GM12878 (cell line): ENCODE measurements at regions of chr2 and their contacts with region 1.

Region 1: DNA sequence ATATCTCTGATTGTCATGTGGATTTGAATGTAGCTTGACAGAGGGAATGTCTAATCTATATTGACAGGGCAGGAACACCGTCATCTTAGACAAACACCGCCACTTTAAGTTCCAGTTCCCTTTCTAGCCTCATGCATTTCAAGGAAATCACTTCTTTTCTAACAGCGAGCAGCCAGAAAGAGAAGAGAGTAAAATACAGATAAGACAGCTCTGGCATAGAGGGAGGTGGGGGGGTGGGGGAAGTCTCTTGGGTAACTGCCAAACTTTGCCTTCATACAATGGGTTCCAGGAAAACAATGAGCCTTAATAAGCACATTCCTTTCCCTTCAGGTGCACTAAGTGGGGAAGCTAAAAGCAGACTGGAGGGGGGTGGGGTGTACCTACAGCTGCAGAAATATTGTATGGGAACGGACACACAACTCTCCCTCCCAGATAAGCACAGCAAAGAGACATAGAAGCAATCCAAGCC is 37.2 kb downstream of the CASP10 start:
- DNase-seq: no peak
- ATAC-seq: no peak
- H3K4me3 ChIP-seq: no peak overlapping the region
- H3K27ac ChIP-seq: no peak overlapping the region
- H3K4me1 ChIP-seq: peaks cover 6% of the 10 kb centered on the region
- H3K27me3 ChIP-seq: no peaks in the 10 kb centered on the region; a peak in 1 of 4 replicates
- CTCF ChIP-seq: no peak
- EP300 ChIP-seq: no peak
- POLR2A ChIP-seq: no peak
- RAD21 ChIP-seq: no peak

Region 2: GRCh38 chr2:201049455-201049854 is 170.7 kb before region 1 on chr2:
- CTCF ChIA-PET with region 1: no interaction called
- POLR2A ChIA-PET with region 1: no interaction called
- RAD21 ChIA-PET with region 1: no interaction called
- SMC1A ChIA-PET with region 1: no interaction called
- in situ Hi-C with region 1: no loop called
- intact Hi-C with region 1: no loop called
- DNase-seq: no peak
- ATAC-seq: no peak
- H3K4me3 ChIP-seq: no peak overlapping the region
- H3K27ac ChIP-seq: no peak overlapping the region
- H3K4me1 ChIP-seq: no peaks in the 10 kb centered on the region
- H3K27me3 ChIP-seq: no peaks in the 10 kb centered on the region
- CTCF ChIP-seq: no peak
- EP300 ChIP-seq: no peak
- POLR2A ChIP-seq: no peak
- RAD21 ChIP-seq: no peak

Region 3: DNA sequence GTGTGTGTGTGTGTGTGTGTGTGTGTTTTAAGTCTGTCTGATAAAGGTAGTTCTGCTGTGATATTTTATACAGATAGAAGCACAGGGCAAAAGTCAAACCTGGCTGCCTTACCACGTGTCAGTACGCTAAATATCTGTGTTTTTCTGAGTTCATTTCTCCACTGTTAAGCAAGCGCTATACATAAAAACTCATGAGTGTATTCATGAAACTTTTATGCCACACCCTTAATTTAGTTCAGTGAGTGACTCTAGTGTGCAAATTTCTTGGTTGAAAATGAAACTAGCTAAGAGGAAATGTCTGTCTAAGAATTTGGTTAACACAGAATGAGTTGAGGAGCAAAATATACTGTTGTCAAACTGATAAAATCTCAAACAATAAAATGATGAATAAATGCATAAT is 26.0 kb before region 1 on chr2:
- CTCF ChIA-PET with region 1: interaction called, 13 read pairs
- POLR2A ChIA-PET with region 1: interaction called, 3 read pairs
- RAD21 ChIA-PET with region 1: interaction called, 3 read pairs
- SMC1A ChIA-PET with region 1: interaction called, 7 read pairs
- in situ Hi-C with region 1: loop called (anchors 5 kb)
- intact Hi-C with region 1: no loop called
- DNase-seq: peak; percentile 55
- ATAC-seq: peak; percentile 98
- H3K4me3 ChIP-seq: no peak overlapping the region
- H3K27ac ChIP-seq: no peak overlapping the region
- H3K4me1 ChIP-seq: peaks cover 12% of the 10 kb centered on the region; the same call in 1 of the 2 replicates
- H3K27me3 ChIP-seq: no peaks in the 10 kb centered on the region
- CTCF ChIP-seq: no peak
- EP300 ChIP-seq: peak; percentile 29 to 57; a peak in 2 of 4 replicates
- POLR2A ChIP-seq: no peak
- RAD21 ChIP-seq: no peak

Region 4: DNA sequence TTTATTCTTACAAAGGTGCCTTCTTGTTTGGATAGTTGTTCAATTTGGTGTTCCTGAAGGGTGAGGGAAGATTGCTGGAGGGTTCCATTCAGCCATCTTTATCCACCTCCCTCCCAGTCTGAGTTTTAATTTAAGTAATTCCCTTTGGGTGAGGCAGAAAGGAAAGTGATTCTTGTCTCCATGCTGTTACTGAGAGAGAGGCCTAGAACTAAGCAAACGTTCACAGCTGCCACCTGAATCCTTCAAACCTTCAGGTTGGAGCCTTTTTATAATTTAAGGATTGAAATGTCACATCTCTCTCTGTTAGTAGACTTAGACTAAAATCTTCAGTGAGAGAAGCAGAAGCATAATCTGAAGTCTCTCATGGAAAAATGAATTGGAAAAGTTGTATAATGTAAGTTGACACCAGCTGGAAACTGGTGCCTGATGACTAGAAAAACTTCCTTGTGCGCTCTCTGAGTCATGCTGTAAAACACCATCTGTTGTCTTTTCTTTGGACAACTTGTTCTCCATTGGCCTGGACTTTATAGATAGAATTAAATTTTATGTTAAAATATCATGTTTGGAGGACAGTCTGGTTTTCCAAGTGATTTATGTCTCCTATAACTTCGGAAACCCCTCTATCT is 246.0 kb after region 1 on chr2:
- CTCF ChIA-PET with region 1: no interaction called
- POLR2A ChIA-PET with region 1: no interaction called
- RAD21 ChIA-PET with region 1: no interaction called
- SMC1A ChIA-PET with region 1: no interaction called
- in situ Hi-C with region 1: no loop called
- intact Hi-C with region 1: no loop called
- DNase-seq: no peak
- ATAC-seq: no peak
- H3K4me3 ChIP-seq: no peak overlapping the region
- H3K27ac ChIP-seq: no peak overlapping the region
- H3K4me1 ChIP-seq: no peaks in the 10 kb centered on the region
- H3K27me3 ChIP-seq: no peaks in the 10 kb centered on the region
- CTCF ChIP-seq: no peak
- EP300 ChIP-seq: no peak
- POLR2A ChIP-seq: no peak
- RAD21 ChIP-seq: no peak

Region 5: GRCh38 chr2:201484805-201485204 is 264.7 kb after region 1 on chr2:
- CTCF ChIA-PET with region 1: no interaction called
- POLR2A ChIA-PET with region 1: no interaction called
- RAD21 ChIA-PET with region 1: no interaction called
- SMC1A ChIA-PET with region 1: no interaction called
- in situ Hi-C with region 1: no loop called
- intact Hi-C with region 1: no loop called
- DNase-seq: no peak
- ATAC-seq: no peak
- H3K4me3 ChIP-seq: no peak overlapping the region
- H3K27ac ChIP-seq: no peak overlapping the region
- H3K4me1 ChIP-seq: no peaks in the 10 kb centered on the region
- H3K27me3 ChIP-seq: no peaks in the 10 kb centered on the region; a peak in 1 of 4 replicates
- CTCF ChIP-seq: no peak
- EP300 ChIP-seq: no peak
- POLR2A ChIP-seq: no peak
- RAD21 ChIP-seq: no peak